ENCODE measurements at regions of chr17 and their contacts with region 1.

Region 1: GRCh38 chr17:18033442-18034099 is 5.4 kb downstream of the ATPAF2 start:
- DNase-seq: peak; percentile 78
- H3K4me3 ChIP-seq: no peak overlapping the region
- H3K27ac ChIP-seq: no peak overlapping the region
- H3K4me1 ChIP-seq: peaks cover 21% of the 10 kb centered on the region
- H3K27me3 ChIP-seq: no peaks in the 10 kb centered on the region
- CTCF ChIP-seq: peak; percentile 46 to 55
- POLR2A ChIP-seq: no peak

Region 2: GRCh38 chr17:17812211-17813057 is 221.1 kb before region 1 on chr17:
- CTCF ChIA-PET with region 1: interaction called, 6 read pairs
- POLR2A ChIA-PET with region 1: interaction called, 3 read pairs
- dilution Hi-C with region 1: no loop called
- intact Hi-C with region 1: loop called (anchors 2 kb)
- DNase-seq: peak; percentile 68
- H3K4me3 ChIP-seq: no peak overlapping the region
- H3K27ac ChIP-seq: no peak overlapping the region
- H3K4me1 ChIP-seq: peaks cover 3% of the 10 kb centered on the region
- H3K27me3 ChIP-seq: no peaks in the 10 kb centered on the region
- CTCF ChIP-seq: peak; percentile 95 to 96
- POLR2A ChIP-seq: no peak

Region 3: DNA sequence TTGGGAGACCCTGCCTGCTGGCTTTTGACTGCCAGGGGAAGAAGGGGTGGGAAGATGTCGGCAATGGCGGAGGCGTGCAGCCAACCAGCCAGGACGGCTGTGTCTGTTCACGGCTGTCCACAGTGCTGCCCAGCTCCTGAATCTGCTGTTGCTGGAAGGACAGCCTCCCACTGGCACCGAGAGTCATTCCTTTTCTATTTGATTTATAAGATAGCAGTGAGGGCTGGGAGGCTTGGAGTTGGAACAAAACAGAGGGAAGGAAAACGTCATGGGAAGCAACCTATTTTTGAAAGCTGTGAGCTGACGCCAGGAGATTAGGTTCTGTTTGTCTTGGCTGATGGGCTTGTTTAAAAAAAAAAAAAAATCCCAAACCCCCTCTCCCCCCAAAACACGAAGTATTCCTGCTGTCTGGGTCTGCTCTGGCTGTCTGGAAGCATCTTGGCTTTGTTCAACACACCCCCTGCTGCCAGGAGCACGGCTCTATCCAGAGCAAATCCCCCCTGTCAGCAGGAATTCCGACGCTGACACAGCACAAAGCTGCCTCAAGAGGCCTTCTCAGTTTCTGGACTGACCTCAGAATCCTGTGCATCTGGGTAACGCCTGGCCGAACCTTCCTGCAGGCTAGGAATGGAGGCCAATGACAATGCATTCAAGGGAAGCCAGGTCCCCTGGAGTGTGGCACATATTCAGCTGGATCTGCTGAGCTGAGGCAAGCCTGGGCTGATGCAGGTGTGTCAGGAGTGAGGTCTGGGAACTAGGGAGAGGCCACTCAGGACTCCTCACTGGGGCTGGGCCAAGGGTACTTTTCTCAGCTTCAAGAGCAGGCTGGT is 155.8 kb before region 1 on chr17:
- CTCF ChIA-PET with region 1: interaction called, 15 read pairs
- POLR2A ChIA-PET with region 1: no interaction called
- dilution Hi-C with region 1: loop called (anchors 25 kb)
- intact Hi-C with region 1: loop called (anchors 5 kb)
- DNase-seq: peak; percentile 98
- H3K4me3 ChIP-seq: peak overlapping the region in 1 of 3 experiments; percentile 4
- H3K27ac ChIP-seq: peak overlapping the region; percentile 81
- H3K4me1 ChIP-seq: peaks cover 29% of the 10 kb centered on the region
- H3K27me3 ChIP-seq: no peaks in the 10 kb centered on the region
- CTCF ChIP-seq: peak in 1 of 2 donors; percentile 23
- POLR2A ChIP-seq: peak; percentile 20

Region 4: DNA sequence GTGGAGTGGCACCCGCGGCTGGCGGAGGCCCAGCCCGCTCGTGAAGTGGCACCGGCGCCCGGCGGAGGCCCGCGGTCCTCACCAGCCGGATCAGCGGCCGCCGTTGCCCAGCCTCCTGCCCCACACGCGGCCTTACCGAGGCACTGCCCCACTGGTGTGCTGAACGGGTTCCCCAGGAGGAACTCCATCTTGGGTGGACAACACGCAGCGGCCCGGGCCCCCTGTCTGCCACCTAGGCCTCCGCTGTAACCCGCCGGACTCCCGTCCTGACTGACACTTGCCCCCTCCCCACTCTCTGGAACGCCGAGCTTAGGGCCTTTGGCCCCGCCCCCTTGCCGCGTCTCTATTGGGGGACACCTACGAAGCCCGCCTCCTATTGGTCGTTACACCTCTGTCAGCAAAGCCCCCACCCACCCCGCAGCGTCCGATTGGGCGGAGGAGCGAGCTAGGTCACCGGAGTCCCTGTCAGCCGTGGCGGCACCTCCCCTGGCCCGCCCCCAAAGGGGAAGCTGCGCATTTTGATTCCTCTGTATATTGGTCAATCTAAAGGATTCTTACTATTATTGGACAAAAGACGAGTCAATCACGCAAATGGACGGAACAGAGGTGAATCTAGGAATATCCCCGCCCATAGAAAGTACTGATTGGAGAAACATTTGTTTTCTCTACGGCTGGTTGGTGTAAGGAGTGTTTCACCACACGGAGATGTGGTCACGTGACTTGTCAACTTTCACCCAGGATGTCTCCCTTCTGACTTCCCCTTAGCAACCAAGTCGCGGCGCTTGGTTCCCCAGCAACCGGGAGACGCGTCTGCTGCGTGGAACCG is 61.2 kb before region 1 on chr17 and contains the starts of genes DRC3 and TOM1L2:
- CTCF ChIA-PET with region 1: interaction called, 5 read pairs
- POLR2A ChIA-PET with region 1: interaction called, 10 read pairs
- dilution Hi-C with region 1: no loop called
- intact Hi-C with region 1: loop called (anchors 2 kb)
- DNase-seq: peak; percentile 100
- H3K4me3 ChIP-seq: peak within 1 kb of the TSS; percentile 79 to 87 (median 82)
- H3K27ac ChIP-seq: peak within 1 kb of the TSS; percentile 67
- H3K4me1 ChIP-seq: peaks cover 17% of the 10 kb centered on the region
- H3K27me3 ChIP-seq: no peaks in the 10 kb centered on the region
- CTCF ChIP-seq: no peak
- POLR2A ChIP-seq: peak; percentile 78
- total RNA-seq, gene DRC3: 1.6 and 2.3 TPM in 2 replicates
- total RNA-seq, gene TOM1L2: 37.6 and 41.5 TPM in 2 replicates

Region 5: GRCh38 chr17:17994271-17995069 is 39.1 kb before region 1 on chr17:
- CTCF ChIA-PET with region 1: interaction called, 17 read pairs
- POLR2A ChIA-PET with region 1: no interaction called
- dilution Hi-C with region 1: no loop called
- intact Hi-C with region 1: loop called (anchors 1 kb)
- DNase-seq: peak; percentile 31
- H3K4me3 ChIP-seq: no peak overlapping the region
- H3K27ac ChIP-seq: no peak overlapping the region
- H3K4me1 ChIP-seq: no peaks in the 10 kb centered on the region
- H3K27me3 ChIP-seq: no peaks in the 10 kb centered on the region
- CTCF ChIP-seq: peak; percentile 29 to 66
- POLR2A ChIP-seq: no peak

Region 6: DNA sequence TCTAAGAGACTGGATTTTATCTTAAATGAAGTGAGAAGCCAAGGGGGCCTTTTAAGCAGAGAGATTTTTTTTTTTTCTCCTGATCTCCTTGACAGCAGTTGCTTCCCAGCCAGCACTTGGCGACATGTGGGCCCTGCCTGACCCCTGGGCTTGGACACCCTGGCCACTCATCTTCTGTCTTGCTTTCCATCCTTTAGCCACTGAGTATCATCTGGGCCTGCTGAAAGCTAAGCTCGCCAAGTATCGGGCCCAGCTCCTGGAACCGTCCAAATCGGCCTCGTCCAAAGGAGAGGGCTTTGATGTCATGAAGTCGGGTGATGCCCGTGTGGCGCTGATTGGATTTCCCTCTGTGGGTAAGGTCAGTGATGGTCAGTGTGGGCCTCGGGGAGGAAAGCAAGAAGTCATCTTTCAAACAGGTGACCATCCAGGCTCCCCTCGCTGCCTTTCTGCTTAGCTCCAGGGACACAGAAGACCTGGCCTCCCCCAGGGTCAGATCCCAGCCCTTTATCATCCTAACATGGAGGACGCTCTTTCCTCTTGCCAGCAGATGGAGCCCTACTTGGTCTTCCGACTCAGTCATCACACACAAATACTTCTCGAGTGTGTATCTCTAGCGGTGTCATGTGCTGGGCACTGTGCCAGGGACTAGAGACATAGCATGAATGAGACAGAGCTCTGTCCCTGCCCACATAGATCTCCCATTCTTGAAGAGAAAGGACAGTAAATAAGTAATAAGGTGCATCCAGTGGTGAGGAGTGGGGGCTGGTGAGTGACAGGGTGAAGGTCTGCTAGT is 60.2 kb after region 1 on chr17:
- CTCF ChIA-PET with region 1: no interaction called
- POLR2A ChIA-PET with region 1: no interaction called
- dilution Hi-C with region 1: no loop called
- intact Hi-C with region 1: no loop called
- DNase-seq: peak; percentile 50
- H3K4me3 ChIP-seq: no peak overlapping the region
- H3K27ac ChIP-seq: no peak overlapping the region
- H3K4me1 ChIP-seq: peaks cover 2% of the 10 kb centered on the region
- H3K27me3 ChIP-seq: no peaks in the 10 kb centered on the region
- CTCF ChIP-seq: peak; percentile 53 to 58
- POLR2A ChIP-seq: no peak